ENCODE measurements at regions of chr16 and their contacts with region 1.

Region 1: GRCh38 chr16:30541502-30542329 is 7.1 kb upstream of the ZNF747 start:
- DNase-seq: no peak
- H3K4me3 ChIP-seq: no peak overlapping the region
- H3K27ac ChIP-seq: no peak overlapping the region
- H3K4me1 ChIP-seq: no peaks in the 10 kb centered on the region
- H3K27me3 ChIP-seq: no peaks in the 10 kb centered on the region
- CTCF ChIP-seq: no peak

Region 2: DNA sequence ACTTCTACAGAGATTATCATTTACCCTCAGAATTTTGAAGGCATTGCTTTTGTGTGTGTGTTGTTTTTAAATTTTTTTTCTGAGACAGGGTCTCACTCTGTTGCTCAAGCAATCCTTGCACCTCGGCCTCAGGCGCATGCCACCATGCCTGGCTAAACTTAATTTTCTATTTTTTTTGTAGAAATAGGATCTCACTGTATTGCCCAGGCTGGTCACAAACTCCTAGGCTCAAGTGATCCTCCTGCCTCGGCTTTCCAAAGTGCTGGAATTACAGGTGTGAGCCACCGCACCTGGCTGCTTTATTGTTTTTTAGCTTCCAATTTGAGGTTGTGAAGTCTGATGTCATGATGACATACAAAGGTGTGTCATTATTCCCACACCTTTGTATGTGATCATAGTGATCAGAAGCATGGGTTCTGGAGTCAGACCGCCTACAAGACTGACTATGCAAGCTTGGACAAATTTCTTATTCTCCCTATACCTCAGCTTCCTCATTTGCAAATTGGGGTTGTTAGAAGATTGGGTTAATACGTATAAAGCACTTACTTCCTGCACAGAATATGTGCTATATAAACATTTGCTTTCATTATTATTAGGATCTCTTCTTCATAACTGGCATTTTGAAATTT is 101.9 kb before region 1 on chr16:
- CTCF ChIA-PET with region 1: no interaction called
- dilution Hi-C with region 1: loop called (anchors 5 kb)
- in situ Hi-C with region 1: loop called in 1 of 2 experiments (anchors 10 kb)
- intact Hi-C with region 1: no loop called
- DNase-seq: no peak
- H3K4me3 ChIP-seq: no peak overlapping the region
- H3K27ac ChIP-seq: no peak overlapping the region
- H3K4me1 ChIP-seq: peaks cover 6% of the 10 kb centered on the region
- H3K27me3 ChIP-seq: no peaks in the 10 kb centered on the region
- CTCF ChIP-seq: no peak

Region 3: DNA sequence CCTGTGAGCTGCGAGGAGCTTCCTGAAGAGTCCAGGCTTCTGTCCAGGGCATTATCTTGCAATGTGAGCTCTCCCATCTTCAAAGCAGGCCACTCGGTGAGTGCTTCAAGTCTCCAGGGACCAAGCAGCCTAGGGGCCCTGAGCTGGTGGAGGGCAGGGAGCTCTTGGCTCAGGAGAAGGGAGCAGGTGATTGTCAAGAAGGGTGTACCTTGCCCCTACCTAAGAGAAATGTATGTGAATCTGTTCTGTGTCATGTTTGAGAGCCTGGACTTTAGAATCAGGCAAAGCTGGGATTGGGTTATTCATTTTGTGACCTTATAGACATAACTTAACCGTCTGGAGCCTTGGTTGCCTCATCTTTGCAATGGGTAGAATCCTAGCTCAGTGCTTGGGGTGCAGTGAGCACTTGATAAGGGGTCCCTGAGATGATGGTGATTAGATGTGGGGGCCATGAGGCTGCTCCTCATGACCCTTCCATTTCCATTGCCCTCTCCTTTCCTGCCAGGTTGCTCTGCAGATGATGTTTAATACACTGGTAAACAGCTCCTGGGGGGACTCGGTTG is 31.3 kb before region 1 on chr16:
- CTCF ChIA-PET with region 1: no interaction called
- dilution Hi-C with region 1: loop called (anchors 5 kb)
- in situ Hi-C with region 1: no loop called
- intact Hi-C with region 1: no loop called
- DNase-seq: no peak
- H3K4me3 ChIP-seq: no peak overlapping the region
- H3K27ac ChIP-seq: no peak overlapping the region
- H3K4me1 ChIP-seq: no peaks in the 10 kb centered on the region
- H3K27me3 ChIP-seq: no peaks in the 10 kb centered on the region
- CTCF ChIP-seq: no peak

Region 4: DNA sequence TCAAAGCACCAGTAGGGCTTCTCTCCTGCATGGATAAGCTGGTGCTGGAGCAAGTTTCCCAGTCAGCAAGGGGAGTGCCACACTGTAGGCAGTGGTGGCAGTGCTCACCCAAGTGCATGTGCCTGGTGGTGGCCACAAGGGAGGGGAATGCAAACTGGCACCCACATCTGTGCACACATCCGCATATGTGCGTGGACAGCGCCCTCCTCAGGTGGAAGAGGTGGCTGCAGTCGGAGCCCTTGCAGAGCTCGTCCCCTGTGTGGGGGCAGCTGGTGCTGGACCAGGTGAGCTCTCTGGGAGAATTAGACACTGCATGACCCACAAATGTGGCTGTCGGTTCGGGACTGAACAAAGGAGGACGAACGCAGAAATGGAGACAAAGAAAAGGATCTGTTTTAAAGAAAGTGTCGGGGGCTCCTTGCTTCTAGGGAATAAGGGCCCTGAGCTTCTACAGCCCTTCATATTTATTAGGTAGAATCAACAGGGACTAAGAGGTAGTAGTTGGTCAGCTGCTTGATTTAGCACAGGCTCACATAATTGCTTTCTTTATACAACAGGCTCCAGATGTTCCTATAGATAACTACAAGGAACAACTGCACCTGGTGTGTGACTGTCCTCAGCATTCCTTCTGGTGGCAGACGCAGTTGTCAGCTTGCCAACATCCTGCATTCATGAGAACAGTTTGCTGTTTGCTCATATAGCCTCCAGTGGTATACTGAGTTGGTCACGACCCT is 73.8 kb after region 1 on chr16:
- CTCF ChIA-PET with region 1: no interaction called
- dilution Hi-C with region 1: loop called (anchors 5 kb)
- in situ Hi-C with region 1: no loop called
- intact Hi-C with region 1: no loop called
- DNase-seq: no peak
- H3K4me3 ChIP-seq: no peak overlapping the region
- H3K27ac ChIP-seq: no peak overlapping the region
- H3K4me1 ChIP-seq: peaks cover under 1% of the 10 kb centered on the region
- H3K27me3 ChIP-seq: no peaks in the 10 kb centered on the region
- CTCF ChIP-seq: peak; percentile 36 to 47

Measured in mammary epithelial cell (primary cell).